Activated CD4-positive, alpha-beta memory T cell treated with anti-CD3 and anti-CD28 coated beads, Interleukin-2, amount 10 ng/mL, durations not matched to agents 7 days and 5 days (primary cell): ENCODE measurements at regions of chr1 and their contacts with region 1.

Region 1: GRCh38 chr1:198612471-198613260 is 26.2 kb upstream of the PTPRC start:
- DNase-seq: no peak
- H3K4me3 Mint-ChIP-seq: peak overlapping the region; percentile 79
- H3K27ac Mint-ChIP-seq: peak overlapping the region; percentile 93
- H3K4me1 Mint-ChIP-seq: peaks cover 70% of the 10 kb centered on the region
- H3K27me3 Mint-ChIP-seq: no peaks in the 10 kb centered on the region

Region 2: GRCh38 chr1:198265073-198265661 is 347.5 kb before region 1 on chr1:
- CTCF ChIA-PET with region 1: no interaction called
- POLR2A ChIA-PET with region 1: no interaction called
- DNase-seq: no peak
- H3K4me3 Mint-ChIP-seq: no peak overlapping the region
- H3K27ac Mint-ChIP-seq: no peak overlapping the region
- H3K4me1 Mint-ChIP-seq: peaks cover 9% of the 10 kb centered on the region
- H3K27me3 Mint-ChIP-seq: no peaks in the 10 kb centered on the region

Region 3: DNA sequence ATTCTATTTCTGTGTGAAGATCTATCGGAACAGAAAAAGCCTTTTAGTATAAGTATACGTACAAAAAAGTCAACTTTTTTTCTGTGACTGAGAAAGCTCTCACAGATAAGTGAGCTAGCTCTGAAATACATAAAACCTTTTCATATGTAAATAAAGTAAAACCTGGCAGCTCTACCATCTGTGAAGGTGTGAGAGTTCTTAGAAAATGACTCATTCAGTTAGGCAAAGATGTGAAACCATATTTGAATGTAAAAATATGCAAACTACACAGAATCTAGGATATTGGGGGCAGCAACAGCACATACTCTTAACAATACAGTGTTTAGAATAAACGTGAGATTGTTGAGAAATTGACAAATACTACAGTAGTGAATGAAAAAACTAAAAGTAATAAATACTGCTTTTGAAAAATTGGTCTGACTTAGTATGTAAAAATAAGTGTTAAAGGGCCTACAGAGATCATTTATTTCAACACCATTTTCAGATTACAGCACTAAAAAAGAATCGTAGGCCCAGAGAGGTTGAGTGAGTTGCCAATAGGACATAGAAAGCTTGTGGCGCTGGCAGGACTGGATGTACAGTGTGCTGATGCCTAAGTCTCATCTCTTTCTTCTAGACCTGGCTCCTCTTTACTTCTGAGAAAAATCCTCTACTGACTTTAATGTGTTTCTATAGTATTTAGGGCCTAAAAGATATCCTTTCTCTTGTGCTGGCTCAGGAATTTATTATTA is 92.0 kb before region 1 on chr1:
- CTCF ChIA-PET with region 1: interaction called, 5 read pairs
- POLR2A ChIA-PET with region 1: interaction called, 25 read pairs
- DNase-seq: no peak
- H3K4me3 Mint-ChIP-seq: peak overlapping the region; percentile 53
- H3K27ac Mint-ChIP-seq: peak overlapping the region; percentile 81
- H3K4me1 Mint-ChIP-seq: peaks cover 63% of the 10 kb centered on the region
- H3K27me3 Mint-ChIP-seq: no peaks in the 10 kb centered on the region

Region 4: DNA sequence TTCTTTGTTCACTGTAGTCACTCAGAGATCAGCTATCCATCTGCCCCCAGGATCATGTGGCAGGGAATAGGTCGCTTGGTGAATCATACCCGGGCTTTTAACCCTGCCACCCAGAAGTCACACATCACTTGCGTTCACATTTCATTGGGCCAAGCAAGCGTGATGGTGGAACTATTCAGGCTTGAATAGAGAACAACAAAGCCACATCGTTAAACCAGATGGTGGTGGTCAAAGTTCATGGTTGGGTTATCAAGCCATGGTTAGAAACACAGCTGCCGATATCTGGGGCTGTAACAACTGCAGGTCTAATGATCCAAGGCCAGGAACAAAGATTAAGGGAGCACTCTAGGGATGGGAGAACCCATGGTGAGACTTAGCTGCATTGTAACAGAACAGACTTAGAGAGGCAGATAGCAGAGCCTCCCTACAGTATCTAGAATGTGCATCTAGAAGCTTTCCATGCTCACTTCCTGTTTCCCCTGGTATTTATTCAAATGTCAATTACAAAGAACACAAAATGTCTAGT is 13.8 kb before region 1 on chr1:
- CTCF ChIA-PET with region 1: interaction called, 4 read pairs
- POLR2A ChIA-PET with region 1: interaction called, 25 read pairs
- DNase-seq: peak; percentile 29
- H3K4me3 Mint-ChIP-seq: no peak overlapping the region
- H3K27ac Mint-ChIP-seq: peak overlapping the region; percentile 76
- H3K4me1 Mint-ChIP-seq: peaks cover 56% of the 10 kb centered on the region
- H3K27me3 Mint-ChIP-seq: no peaks in the 10 kb centered on the region

Region 5: GRCh38 chr1:198651650-198652400 is 39.2 kb after region 1 on chr1:
- CTCF ChIA-PET with region 1: no interaction called
- POLR2A ChIA-PET with region 1: interaction called, 25 read pairs
- DNase-seq: no peak
- H3K4me3 Mint-ChIP-seq: peak overlapping the region; percentile 65
- H3K27ac Mint-ChIP-seq: peak overlapping the region; percentile 67
- H3K4me1 Mint-ChIP-seq: peaks cover 78% of the 10 kb centered on the region
- H3K27me3 Mint-ChIP-seq: no peaks in the 10 kb centered on the region

Region 6: DNA sequence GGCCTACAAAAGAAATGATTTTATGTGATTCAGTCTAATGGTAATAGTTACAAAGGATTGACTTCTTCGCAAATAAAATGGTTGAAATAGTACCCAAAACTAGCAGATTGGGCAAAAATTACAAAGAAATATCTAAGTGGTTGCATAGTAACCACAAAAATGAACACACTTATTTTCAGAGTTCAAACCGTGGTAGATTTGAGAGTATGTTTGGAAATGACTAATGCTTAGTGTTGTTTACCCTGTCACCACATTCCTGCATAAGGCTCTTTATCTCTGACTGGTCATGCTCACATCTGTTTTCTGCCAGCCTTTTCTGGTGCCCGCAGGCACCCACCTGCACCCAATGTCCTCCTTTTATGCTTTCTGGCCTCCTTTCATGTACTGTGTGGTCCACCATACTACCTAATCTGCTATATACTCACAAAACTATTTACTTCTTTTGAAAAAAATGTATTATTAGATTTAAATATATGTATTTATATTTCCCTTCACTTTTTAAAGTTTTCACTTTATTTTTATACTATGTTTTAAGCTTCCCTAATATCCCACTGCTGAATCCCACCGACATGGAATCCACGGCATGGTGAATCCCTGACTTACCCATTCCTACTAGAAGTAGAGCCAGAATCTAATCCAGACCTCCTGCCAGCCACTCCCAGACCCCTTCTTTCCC is 56.5 kb after region 1 on chr1:
- CTCF ChIA-PET with region 1: no interaction called
- POLR2A ChIA-PET with region 1: interaction called, 12 read pairs
- DNase-seq: peak; percentile 60
- H3K4me3 Mint-ChIP-seq: peak overlapping the region; percentile 41
- H3K27ac Mint-ChIP-seq: peak overlapping the region; percentile 87
- H3K4me1 Mint-ChIP-seq: peaks cover 88% of the 10 kb centered on the region
- H3K27me3 Mint-ChIP-seq: no peaks in the 10 kb centered on the region

Region 7: DNA sequence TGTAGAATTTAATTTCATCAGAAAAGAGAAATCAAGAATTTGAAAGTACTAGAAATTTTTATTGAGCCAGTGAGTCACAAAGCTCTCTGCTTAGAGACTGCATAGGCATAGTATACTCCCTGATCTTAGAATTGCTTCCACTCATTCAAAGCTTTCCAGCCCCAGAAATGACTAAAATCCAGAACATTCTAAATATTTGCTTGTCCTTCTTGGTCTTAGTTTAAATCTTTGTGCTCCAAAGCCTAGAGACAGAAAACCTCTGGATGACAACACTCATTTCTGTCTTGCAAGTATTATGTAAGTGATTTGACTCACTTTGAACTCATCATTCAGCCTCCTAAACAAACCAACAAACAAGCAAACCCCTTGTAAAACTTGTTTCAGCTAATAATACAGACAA is 100.4 kb after region 1 on chr1:
- CTCF ChIA-PET with region 1: no interaction called
- POLR2A ChIA-PET with region 1: no interaction called
- DNase-seq: no peak
- H3K4me3 Mint-ChIP-seq: no peak overlapping the region
- H3K27ac Mint-ChIP-seq: no peak overlapping the region
- H3K4me1 Mint-ChIP-seq: peaks cover 37% of the 10 kb centered on the region
- H3K27me3 Mint-ChIP-seq: no peaks in the 10 kb centered on the region